Cardiac septum (tissue), 1 donor: ENCODE measurements at regions of chr2 and their contacts with region 1.

Region 1: GRCh38 chr2:61538200-61538919 is at the start of gene XPO1:
- DNase-seq: peak; percentile 100
- total RNA-seq, gene XPO1: 71.8 TPM

Region 2: DNA sequence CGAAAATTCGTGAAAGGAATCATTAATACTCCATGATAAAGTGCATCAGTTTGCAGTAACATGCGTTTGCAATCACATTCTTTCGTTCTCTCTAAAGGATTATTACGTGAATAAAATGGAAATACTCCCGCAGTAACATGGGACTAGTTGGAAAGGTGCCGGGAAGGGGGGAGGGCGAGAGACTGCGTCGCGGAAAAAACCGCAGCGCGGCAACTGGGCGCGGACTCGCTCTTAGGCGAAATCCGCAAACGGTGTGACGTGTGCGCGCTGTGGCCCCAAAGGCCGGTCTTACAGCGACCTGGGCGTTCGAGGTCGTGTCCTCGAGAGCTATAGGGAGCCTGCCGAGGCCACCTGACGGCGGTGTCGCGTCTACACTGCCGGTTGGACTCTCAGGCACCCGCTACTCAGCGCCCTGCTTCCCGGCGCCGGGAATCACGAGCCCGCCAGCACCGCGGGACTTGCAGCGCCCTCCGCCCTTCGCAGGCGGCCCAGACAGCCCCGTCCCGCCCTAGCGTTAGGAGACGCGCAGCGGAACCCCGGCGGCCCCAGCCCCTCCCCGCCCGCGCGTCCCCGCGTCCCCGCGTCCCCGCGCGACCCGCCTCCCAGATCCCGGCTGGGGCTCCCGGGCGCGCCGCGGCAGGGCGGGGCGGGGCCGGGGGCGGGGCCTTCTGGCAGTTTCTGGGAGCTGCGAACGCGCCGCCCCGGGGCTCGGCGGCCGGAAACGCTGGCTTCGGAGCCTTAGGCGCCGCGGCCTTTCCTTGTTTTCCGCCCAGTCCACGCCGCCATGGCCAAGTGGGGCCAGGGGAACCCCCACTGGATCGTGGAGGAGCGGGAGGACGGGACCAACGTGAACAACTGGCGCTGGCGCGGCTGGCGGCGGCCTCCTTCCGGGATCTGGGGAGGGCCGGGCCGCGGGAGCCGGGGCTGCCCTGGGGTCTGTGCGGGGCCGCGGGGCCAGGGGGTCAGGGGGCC is 361.3 kb before region 1 on chr2:
- intact Hi-C with region 1: loop called (anchors 5 kb)
- DNase-seq: peak; percentile 96

Region 3: DNA sequence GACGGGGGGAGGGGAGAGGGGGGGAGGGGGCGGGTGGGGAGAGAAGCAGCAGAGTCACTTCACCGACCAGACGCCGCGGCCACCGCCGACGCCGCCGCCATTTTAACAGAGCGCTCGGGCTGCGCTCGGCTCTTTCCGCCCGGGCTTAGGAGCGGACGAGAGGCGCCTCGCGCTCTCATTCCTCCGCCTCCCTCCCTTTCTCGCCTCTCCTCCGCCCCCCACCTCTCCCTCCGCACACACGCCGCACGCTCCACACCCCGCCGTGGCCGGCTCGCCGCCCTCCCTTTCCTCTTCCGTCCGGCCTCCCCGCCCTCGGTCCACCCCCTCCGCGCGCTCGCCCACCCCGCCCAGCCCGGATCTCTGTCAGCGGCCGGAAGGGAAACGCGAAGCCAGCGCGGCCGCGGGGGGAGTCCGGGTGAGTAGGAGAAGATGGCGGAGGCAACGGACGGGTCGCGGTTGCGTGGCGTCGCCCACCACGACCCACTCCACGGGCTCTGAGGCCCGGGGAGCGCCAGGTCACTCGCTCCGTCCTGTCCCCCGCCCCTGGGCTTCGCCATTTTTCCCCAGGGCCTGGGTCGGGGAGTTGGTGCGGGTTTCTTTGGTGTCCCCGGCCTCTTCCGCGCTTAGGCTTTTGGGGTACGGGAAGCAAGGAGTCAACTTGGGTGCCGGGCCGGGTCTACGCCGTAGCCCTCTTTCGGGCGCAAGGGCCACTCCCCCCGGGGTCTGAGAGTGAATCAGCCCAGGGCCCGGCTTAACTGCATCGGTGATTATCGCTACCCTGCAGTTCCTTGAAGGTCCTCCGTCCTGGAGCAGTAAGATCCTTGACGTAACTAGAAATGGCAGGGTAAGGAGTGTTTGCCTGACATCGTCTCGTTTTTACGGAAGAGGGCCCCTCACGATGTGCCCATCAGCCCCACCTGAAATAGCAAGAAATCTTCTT is 67.1 kb before region 1 on chr2 and contains the start of gene USP34:
- intact Hi-C with region 1: loop called (anchors 1 kb)
- DNase-seq: peak; percentile 98
- total RNA-seq, gene USP34: 73.2 TPM

Region 4: GRCh38 chr2:61694312-61695274 is 156.2 kb after region 1 on chr2:
- intact Hi-C with region 1: loop called (anchors 5 kb)
- DNase-seq: peak; percentile 99

Region 5: GRCh38 chr2:61764035-61764800 is 225.9 kb after region 1 on chr2:
- intact Hi-C with region 1: loop called (anchors 1 kb)
- DNase-seq: peak; percentile 97

Region 6: DNA sequence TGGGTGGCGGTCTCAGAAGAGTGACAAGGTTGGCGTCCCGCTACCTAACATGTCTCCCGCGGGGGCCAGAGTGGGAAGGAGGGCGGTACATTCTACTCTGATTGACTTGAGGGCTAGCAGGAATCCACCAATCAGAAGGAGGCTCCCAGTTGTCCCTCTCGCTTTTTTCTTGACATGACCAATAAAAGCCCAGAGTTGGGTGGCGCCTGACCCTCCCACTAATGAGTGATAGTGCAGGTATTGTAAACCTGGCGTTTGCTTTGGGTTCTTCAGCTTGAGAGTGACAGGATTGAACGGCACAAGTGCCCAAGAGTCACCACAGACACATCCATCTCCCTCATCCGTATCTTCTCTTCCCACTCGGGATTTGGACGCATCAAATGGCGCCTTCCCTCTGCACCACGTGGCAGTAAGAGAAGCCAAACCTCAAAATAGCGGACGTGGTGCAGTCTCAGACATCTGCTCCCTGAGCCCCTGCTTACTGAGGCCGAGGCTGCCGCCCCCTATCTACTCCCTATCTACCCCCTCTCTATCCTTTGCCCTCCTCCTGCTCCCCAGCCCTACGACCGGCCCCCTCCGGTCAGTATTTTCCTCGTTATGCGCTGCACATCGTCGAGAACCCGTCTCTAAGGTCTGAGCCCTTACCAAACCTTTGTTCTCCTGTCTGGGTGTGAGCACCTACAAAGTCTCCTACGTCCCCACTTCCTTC is 316.3 kb after region 1 on chr2:
- intact Hi-C with region 1: loop called (anchors 5 kb)
- DNase-seq: peak; percentile 90

Region 7: GRCh38 chr2:61888267-61889055 is 350.1 kb after region 1 on chr2 and contains the start of gene CCT4:
- intact Hi-C with region 1: loop called (anchors 5 kb)
- DNase-seq: peak; percentile 95
- total RNA-seq, gene CCT4: 91.8 TPM